ENCODE measurements at regions of chr19 and their contacts with region 1.

Region 1: DNA sequence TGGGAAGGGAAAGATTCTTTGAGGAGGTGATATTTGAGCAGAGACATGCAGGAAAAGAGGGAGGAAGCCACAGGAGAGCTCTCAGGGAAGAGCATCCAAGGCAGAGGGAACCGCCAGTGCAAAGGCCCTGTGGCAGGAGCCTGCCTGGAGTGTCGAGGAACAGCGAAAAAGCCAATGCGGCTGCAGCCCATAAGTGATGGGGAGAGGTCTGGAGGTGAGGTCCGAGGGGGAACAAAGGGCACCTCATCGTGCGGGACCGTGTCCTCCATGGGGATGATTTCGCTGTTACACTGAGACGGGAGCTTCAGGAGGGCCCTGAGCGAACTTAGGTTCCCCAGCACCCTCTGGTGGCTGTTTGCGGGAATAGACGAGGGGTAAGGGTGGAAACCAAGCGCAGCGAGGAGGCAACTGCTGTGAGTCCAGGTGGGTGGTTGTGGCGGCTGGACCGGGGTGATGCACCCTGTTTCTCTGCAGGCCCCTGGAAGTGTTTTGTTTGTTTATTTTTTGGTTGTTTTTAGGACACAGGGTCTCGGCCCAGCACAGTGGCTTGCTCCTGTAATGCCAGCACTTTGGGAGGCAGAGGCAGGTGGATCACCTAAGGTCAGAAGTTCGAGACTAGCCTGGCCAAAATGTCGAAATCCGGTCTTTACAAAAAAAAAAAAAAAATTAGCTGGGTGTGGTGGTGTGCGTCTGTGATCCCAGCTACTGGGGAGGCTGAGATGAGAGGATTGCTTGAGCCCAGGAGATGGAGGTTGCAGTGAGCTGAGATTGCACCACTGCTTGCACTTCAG is 5.9 kb upstream of the EHD2 start:
- DNase-seq: peak; percentile 52
- ATAC-seq: peak; percentile 97
- H3K4me3 ChIP-seq: no peak overlapping the region
- H3K27ac ChIP-seq: no peak overlapping the region
- H3K4me1 ChIP-seq: no peaks in the 10 kb centered on the region
- H3K27me3 ChIP-seq: no peaks in the 10 kb centered on the region
- CTCF ChIP-seq: peak; percentile 85

Region 2: GRCh38 chr19:47436712-47437401 is 270.5 kb before region 1 on chr19:
- CTCF ChIA-PET with region 1: interaction called, 10 read pairs
- POLR2A ChIA-PET with region 1: no interaction called
- in situ Hi-C with region 1: no loop called
- intact Hi-C with region 1: loop called (anchors 5 kb)
- DNase-seq: peak; percentile 45
- ATAC-seq: peak; percentile 96
- H3K4me3 ChIP-seq: no peak overlapping the region
- H3K27ac ChIP-seq: no peak overlapping the region
- H3K4me1 ChIP-seq: no peaks in the 10 kb centered on the region
- H3K27me3 ChIP-seq: no peaks in the 10 kb centered on the region
- CTCF ChIP-seq: peak; percentile 82

Region 3: DNA sequence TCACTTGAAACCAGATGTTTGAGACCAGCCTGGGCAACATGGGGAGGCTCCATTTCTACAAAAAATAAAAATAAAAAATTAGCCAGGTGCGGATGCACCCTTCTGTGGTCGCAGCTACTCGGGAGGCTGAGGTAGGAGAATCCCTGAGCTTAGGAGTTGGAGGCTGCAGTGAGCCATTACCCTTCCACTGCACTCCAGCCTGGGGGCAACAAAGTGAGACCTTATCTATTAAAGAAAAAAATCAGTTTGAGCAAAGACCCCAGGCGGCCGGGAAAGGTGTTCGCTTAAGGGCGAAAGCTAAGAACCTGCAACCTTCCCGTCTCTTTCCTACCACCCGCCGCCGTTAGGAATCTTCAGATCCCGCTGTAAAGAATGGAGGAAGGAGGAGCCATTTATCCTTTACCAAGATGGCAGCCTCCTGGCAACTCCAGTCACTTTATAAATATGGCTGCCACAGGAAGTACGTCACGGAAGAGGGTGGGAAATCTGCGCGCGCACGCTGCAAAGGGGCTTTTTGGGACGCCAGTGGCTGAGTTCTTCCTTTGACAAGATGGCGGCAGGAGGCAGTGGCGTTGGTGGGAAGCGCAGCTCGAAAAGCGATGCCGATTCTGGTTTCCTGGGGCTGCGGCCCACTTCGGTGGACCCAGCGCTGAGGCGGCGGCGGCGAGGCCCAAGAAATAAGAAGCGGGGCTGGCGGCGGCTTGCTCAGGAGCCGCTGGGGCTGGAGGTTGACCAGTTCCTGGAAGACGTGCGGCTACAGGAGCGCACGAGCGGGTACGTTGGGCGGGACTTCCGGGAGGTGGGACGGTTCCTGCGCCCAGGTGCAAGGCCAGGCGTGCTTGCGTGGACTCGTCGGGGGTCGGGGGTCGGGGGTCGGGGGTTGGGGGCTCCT is 37.9 kb after region 1 on chr19 and contains the start of gene NOP53:
- CTCF ChIA-PET with region 1: no interaction called
- POLR2A ChIA-PET with region 1: no interaction called
- in situ Hi-C with region 1: no loop called
- intact Hi-C with region 1: no loop called
- DNase-seq: peak; percentile 80
- ATAC-seq: peak; percentile 84
- H3K4me3 ChIP-seq: peak within 1 kb of the TSS; percentile 64
- H3K27ac ChIP-seq: peak within 1 kb of the TSS; percentile 85
- H3K4me1 ChIP-seq: peaks cover 6% of the 10 kb centered on the region
- H3K27me3 ChIP-seq: no peaks in the 10 kb centered on the region
- CTCF ChIP-seq: no peak
- total RNA-seq, gene NOP53: 64.3 TPM

Measured in Panc1 (cell line).